BJ (cell line): ENCODE measurements at regions of chr14 and their contacts with region 1.

Region 1: GRCh38 chr14:54329082-54329695 is 67.6 kb upstream of the CDKN3 start:
- DNase-seq: no peak
- H3K4me3 ChIP-seq: no peak overlapping the region
- H3K27me3 ChIP-seq: no peaks in the 10 kb centered on the region
- CTCF ChIP-seq: peak; percentile 89

Region 2: GRCh38 chr14:54175298-54175942 is 153.8 kb before region 1 on chr14:
- CTCF ChIA-PET with region 1: interaction called, 17 read pairs
- POLR2A ChIA-PET with region 1: no interaction called
- DNase-seq: no peak
- H3K4me3 ChIP-seq: no peak overlapping the region
- H3K27me3 ChIP-seq: no peaks in the 10 kb centered on the region
- CTCF ChIP-seq: peak; percentile 72

Region 3: DNA sequence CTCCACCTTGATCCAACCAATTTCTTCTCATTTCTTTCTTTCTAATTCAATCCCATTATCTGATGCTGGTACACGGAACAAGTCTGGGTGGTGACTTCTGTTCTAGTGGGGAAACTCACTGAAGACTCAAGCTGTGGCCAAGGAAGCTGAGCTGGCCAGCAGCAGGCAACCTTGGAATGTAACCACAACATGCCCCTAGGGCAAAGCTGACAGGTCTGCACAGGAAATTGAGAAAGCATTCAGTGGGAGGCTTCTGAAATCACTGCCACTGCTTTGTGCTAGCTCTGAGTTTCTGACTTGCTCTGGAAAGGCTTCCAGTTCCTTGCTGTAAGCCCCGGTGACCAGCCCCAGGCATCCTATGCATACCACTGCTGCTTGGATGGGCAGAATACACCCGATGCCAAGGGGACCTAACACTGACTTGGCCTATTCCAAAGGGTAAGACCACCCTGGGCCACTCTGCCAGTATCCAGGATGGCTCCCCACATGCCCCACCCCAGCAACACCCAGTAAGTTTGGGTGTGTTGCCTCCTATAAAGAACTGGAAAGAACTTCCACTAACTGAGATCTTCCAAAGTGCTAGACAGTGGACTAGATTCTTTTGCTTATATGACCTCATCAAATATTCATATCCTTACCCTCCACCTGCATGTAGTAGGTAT is 16.9 kb before region 1 on chr14:
- CTCF ChIA-PET with region 1: interaction called, 18 read pairs
- POLR2A ChIA-PET with region 1: no interaction called
- DNase-seq: peak; percentile 78
- H3K4me3 ChIP-seq: no peak overlapping the region
- H3K27me3 ChIP-seq: no peaks in the 10 kb centered on the region
- CTCF ChIP-seq: no peak

Region 4: DNA sequence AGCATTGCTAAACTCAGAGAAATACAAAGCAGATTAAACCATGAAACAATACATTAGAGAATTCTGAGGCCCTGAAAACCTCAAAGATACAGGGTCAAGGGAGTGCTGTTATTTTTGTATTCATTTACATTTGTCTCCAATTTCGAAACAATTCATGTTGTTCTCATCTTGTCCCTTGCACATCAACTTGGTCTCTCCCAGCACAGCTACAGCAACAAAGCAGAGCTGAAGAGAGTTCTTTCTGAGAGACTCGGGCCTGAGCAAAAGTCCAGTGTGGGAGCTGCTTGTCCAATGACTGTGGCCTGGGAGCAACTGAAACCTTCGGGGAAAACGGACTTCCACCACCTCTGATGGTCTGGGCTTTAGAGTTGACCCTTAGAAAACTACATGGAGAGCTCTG is 11.8 kb before region 1 on chr14:
- CTCF ChIA-PET with region 1: interaction called, 18 read pairs
- POLR2A ChIA-PET with region 1: no interaction called
- DNase-seq: no peak
- H3K4me3 ChIP-seq: no peak overlapping the region
- H3K27me3 ChIP-seq: no peaks in the 10 kb centered on the region
- CTCF ChIP-seq: no peak

Region 5: GRCh38 chr14:54347997-54348611 is 18.9 kb after region 1 on chr14:
- CTCF ChIA-PET with region 1: interaction called, 10 read pairs
- POLR2A ChIA-PET with region 1: no interaction called
- DNase-seq: no peak
- H3K4me3 ChIP-seq: no peak overlapping the region
- H3K27me3 ChIP-seq: no peaks in the 10 kb centered on the region
- CTCF ChIP-seq: peak; percentile 68

Region 6: DNA sequence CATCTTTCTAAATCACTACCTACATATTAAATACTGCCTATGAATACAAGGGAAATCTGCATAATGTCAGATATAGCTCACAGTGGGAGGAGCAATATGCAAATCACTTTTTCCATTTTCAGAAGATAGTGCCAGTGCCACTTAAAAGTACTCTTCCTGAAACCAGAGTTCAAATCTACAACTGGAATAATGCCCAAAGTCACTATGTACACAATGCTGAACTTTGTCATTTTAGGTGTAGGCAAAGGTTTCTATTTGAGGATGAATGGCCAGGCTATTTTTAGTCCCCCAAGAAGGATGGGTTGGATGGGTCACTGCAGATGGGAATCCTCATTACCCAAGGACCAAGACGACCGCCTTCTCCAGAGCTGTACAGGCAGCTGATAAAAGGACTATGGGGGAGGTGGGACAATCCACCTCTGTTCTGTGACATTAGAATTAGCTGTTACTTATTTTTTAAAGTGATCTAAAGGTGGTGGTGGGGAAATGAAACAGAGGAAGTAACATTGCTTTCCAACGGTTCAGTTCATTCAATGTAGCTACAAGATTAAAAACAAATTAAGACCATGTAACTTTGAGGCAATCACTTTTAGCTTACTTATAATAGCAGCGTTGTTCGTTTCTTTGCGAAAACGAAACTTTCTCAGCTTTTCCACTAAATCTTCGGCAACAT is 154.0 kb after region 1 on chr14:
- CTCF ChIA-PET with region 1: no interaction called
- POLR2A ChIA-PET with region 1: no interaction called
- DNase-seq: no peak
- H3K4me3 ChIP-seq: no peak overlapping the region
- H3K27me3 ChIP-seq: no peaks in the 10 kb centered on the region
- CTCF ChIP-seq: no peak